PC-9 (cell line): ENCODE measurements at regions of chr9 and their contacts with region 1.

Region 1: GRCh38 chr9:88488166-88488565 is 46.8 kb upstream of the NXNL2 start:
- DNase-seq: no peak
- H3K4me3 ChIP-seq: no peak overlapping the region
- H3K27ac ChIP-seq: no peak overlapping the region
- H3K4me1 ChIP-seq: no peaks in the 10 kb centered on the region
- H3K27me3 ChIP-seq: no peaks in the 10 kb centered on the region
- CTCF ChIP-seq: no peak

Region 2: DNA sequence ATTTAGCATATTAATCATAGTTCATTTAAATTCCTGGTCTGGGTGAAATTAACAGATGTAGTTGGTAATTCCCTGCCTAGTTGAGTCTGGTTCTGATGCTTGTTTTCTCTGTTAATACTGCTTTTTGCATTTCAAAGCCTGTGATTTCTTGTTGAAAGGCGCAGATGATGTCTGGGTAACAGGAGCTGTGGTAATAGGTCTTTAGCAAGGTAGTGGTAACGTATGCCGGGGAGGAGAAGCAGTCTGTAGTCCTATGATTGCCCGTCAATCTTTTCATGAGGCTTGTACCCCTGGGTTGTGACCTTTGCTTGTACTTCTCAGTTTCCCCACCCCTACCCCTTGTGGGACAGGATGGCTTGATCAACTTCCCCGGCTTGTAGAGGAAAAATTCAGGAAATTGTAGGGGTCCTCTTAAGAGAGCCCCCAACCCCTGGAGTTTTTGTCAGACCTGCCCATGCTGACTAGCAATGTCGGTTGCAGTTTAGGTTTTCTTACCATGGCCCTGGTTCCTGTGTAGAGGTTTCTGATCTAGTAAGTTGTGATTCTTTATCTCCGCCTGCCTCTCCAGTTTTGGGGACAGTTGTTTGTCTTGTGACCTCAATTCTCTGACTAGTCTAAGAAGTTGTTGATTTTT is 44.6 kb before region 1 on chr9:
- CTCF ChIA-PET with region 1: no interaction called
- POLR2A ChIA-PET with region 1: interaction called, 12 read pairs
- intact Hi-C with region 1: no loop called
- DNase-seq: no peak
- H3K4me3 ChIP-seq: no peak overlapping the region
- H3K27ac ChIP-seq: no peak overlapping the region
- H3K4me1 ChIP-seq: no peaks in the 10 kb centered on the region
- H3K27me3 ChIP-seq: no peaks in the 10 kb centered on the region
- CTCF ChIP-seq: no peak

Region 3: GRCh38 chr9:88747768-88748167 is 259.6 kb after region 1 on chr9:
- CTCF ChIA-PET with region 1: no interaction called
- POLR2A ChIA-PET with region 1: no interaction called
- intact Hi-C with region 1: no loop called
- DNase-seq: peak; percentile 21 to 39
- H3K4me3 ChIP-seq: no peak overlapping the region
- H3K27ac ChIP-seq: no peak overlapping the region
- H3K4me1 ChIP-seq: peaks cover 23% of the 10 kb centered on the region
- H3K27me3 ChIP-seq: no peaks in the 10 kb centered on the region
- CTCF ChIP-seq: no peak